A549 (cell line): ENCODE measurements at regions of chr10 and their contacts with region 1.

Region 1: DNA sequence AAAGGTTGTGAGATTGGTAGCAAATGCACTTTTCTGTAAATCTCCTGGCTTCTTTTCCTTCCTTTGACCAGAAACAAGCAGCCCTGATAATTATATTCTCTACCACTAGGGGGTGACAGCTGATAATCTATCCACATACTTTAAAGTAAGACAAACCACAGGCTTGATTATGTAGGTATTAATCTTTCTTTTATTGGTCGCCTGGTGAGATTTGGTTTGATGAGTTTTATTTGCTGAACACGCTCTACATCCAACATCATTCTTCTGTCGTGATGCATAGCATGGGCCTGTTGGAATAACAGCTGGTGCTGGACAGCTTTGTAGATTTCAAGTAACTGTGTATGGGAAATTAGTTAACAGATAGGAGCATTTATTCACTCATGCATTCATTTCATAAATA is 63.5 kb downstream of the ZNF365 start:
- DNase-seq: peak; percentile 40 to 68
- ATAC-seq: peak; percentile 69 to 85; a peak in 4 of 6 replicates
- H3K4me3 ChIP-seq: no peak overlapping the region
- H3K27ac ChIP-seq: no peak overlapping the region
- H3K4me1 ChIP-seq: peaks cover 18% of the 10 kb centered on the region
- CTCF ChIP-seq: peak; percentile 89
- EP300 ChIP-seq: no peak
- POLR2A ChIP-seq: no peak
- RAD21 ChIP-seq: peak; percentile 86

Region 2: DNA sequence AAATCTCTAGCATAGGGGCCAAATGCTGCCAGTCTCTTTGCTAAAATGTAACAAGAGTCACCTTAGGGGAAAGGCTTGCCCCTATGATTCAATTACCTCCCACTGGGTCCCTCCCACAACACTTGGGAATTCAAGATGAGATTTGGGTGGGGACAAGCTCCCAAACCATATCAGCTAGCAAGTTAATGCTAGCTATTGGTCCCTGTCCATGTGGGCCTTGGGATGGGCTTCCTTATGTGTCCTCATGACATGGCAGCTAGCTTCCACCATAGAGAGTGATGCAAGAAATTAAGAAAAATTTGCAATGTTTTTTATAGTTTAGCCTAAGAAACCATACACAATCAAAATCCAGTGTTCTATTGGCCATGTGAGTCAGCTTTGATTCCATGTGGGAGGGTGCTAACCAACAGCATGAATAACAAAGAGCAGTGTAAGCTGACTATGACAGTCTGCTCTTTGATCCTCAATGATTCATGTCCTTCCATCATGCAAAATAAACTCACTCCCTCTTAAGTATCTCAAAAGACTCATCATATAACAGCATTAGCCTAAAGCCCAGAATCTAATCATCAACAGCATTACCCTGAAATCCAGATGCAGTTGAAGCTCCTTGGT is 85.2 kb before region 1 on chr10:
- CTCF ChIA-PET with region 1: no interaction called
- POLR2A ChIA-PET with region 1: no interaction called
- DNase-seq: no peak
- ATAC-seq: no peak
- H3K4me3 ChIP-seq: no peak overlapping the region
- H3K27ac ChIP-seq: no peak overlapping the region
- H3K4me1 ChIP-seq: no peaks in the 10 kb centered on the region
- CTCF ChIP-seq: no peak
- EP300 ChIP-seq: no peak
- POLR2A ChIP-seq: no peak
- RAD21 ChIP-seq: no peak

Region 3: DNA sequence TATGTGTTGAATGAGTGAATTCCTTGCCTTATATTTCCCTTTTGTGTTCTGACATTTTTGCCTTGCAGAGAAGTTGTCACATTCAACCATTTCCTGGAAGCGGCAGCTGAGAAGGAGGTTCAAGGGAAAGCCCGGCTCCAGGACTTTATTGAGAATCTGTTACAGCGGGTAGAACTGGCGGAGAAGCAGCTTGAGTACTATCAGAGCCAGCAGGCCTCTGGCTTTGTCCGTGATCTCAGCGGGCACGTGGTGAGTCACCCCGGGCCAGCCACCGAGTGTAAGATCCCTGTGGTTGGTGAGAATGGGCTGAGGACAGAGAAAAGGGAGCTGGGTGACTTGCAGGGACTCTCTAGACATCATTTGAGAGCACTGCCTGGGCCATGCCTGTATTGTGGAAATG is 49.4 kb before region 1 on chr10:
- CTCF ChIA-PET with region 1: no interaction called
- POLR2A ChIA-PET with region 1: no interaction called
- DNase-seq: no peak
- ATAC-seq: no peak
- H3K4me3 ChIP-seq: no peak overlapping the region
- H3K27ac ChIP-seq: no peak overlapping the region
- H3K4me1 ChIP-seq: no peaks in the 10 kb centered on the region
- CTCF ChIP-seq: no peak
- EP300 ChIP-seq: no peak
- POLR2A ChIP-seq: no peak
- RAD21 ChIP-seq: no peak

Region 4: GRCh38 chr10:62422068-62422590 is 15.6 kb before region 1 on chr10:
- CTCF ChIA-PET with region 1: interaction called, 15 read pairs
- POLR2A ChIA-PET with region 1: no interaction called
- DNase-seq: no peak
- ATAC-seq: no peak; a peak in 1 of 6 replicates
- H3K4me3 ChIP-seq: no peak overlapping the region
- H3K27ac ChIP-seq: no peak overlapping the region
- H3K4me1 ChIP-seq: peaks cover 18% of the 10 kb centered on the region
- CTCF ChIP-seq: no peak
- EP300 ChIP-seq: no peak
- POLR2A ChIP-seq: no peak
- RAD21 ChIP-seq: no peak

Region 5: DNA sequence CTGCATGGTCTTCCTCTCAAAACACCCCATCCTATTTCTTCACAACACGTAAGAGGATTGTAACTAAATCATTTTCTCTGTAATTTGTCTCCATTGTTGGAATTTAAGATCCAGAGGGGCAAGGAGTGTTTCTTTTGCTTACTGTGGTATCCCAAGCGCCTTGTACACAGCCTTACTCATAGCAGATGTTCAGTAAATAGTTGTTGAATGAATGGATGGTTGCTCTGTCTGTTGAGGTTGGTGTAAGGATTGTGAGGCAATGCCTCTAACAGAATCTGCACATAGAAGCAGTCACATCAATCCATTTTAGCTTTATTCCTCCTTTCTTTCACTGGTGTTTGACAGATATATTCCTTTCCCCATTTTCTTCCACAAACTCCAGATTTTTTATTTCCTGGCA is 26.6 kb after region 1 on chr10:
- CTCF ChIA-PET with region 1: interaction called, 13 read pairs
- POLR2A ChIA-PET with region 1: no interaction called
- DNase-seq: no peak
- ATAC-seq: no peak
- H3K4me3 ChIP-seq: no peak overlapping the region
- H3K27ac ChIP-seq: no peak overlapping the region
- H3K4me1 ChIP-seq: no peaks in the 10 kb centered on the region
- CTCF ChIP-seq: no peak
- EP300 ChIP-seq: no peak
- POLR2A ChIP-seq: no peak
- RAD21 ChIP-seq: no peak

Region 6: DNA sequence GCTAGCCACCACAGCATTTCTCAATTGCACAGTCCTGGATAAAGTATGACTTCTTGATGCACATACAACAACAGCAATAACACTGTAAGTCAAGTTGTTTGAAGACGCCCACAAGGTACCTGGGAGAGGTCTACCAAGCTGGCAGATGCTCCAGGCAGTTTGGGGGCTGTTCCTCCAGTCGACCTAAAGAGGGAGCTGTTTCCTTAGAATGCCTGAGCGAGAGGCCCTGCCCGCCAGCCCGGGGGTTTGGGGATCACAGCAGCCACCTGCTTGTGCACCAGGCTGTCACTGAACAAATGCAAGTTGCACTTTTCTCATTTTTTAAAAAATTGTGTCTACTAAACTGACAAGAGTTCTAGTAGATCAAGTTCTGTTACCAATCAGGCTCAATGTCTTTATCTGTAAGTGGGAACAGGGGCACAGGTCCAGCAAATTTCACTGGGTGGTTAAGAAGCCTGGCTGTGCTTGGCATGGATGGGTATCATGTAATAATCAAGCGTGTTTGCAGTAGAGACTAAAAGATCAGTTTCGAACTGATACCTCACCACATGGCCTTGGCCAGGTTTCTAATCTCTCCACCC is 173.0 kb after region 1 on chr10:
- CTCF ChIA-PET with region 1: interaction called, 16 read pairs
- POLR2A ChIA-PET with region 1: no interaction called
- DNase-seq: peak; percentile 35 to 53
- ATAC-seq: peak; percentile 66 to 89; a peak in 5 of 6 replicates
- H3K4me3 ChIP-seq: no peak overlapping the region
- H3K27ac ChIP-seq: no peak overlapping the region
- H3K4me1 ChIP-seq: peaks cover 17% of the 10 kb centered on the region; the same call in 2 of the 3 replicates
- CTCF ChIP-seq: peak; percentile 44
- EP300 ChIP-seq: no peak
- POLR2A ChIP-seq: no peak
- RAD21 ChIP-seq: peak; percentile 70 to 81

Region 7: DNA sequence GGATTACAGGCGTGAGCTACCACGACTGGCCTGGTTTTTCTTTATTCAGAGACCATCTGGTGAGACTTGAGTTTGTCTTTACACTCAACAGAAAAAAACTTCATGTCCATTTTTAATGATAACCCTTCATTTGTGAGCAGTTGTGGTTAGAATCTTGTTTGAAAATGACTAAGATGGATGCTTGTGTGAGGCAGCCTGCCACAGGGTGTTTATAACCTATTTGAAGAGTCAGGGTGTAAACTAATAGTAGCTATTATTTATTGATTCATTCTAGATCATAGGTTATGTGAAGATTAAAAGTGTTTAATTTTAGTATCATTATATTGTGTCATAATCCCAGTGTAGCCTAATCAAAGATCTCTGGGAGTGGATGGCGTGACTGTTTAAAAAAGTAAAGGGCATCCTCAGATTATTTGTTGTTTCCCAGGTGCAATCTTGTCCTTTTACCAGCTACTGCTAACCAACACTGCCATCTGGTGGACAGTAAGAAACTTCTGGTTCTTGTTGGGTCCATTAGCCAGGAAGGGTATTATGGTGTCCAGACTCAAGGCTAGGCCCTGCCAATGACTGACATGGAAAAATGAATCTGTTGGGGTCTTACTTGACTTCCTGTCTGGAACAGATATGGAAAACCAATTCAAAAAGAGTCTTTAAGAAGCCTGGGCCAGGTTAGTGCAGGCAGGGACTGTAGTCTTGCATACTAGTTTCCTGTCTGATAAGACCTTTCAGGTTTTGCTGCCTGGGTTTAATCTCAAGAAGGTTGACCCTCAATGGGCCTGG is 720.3 kb after region 1 on chr10:
- CTCF ChIA-PET with region 1: interaction called, 38 read pairs
- POLR2A ChIA-PET with region 1: no interaction called
- DNase-seq: peak; percentile 57 to 92
- ATAC-seq: peak; percentile 80 to 88
- H3K4me3 ChIP-seq: no peak overlapping the region
- H3K27ac ChIP-seq: no peak overlapping the region
- H3K4me1 ChIP-seq: no peaks in the 10 kb centered on the region
- CTCF ChIP-seq: peak; percentile 85
- EP300 ChIP-seq: no peak
- POLR2A ChIP-seq: no peak
- RAD21 ChIP-seq: peak; percentile 89 to 91